Activated naive CD4-positive, alpha-beta T cell treated with anti-CD3 and anti-CD28 coated beads for 36 hours (primary cell): ENCODE measurements at regions of chr16 and their contacts with region 1.

Region 1: DNA sequence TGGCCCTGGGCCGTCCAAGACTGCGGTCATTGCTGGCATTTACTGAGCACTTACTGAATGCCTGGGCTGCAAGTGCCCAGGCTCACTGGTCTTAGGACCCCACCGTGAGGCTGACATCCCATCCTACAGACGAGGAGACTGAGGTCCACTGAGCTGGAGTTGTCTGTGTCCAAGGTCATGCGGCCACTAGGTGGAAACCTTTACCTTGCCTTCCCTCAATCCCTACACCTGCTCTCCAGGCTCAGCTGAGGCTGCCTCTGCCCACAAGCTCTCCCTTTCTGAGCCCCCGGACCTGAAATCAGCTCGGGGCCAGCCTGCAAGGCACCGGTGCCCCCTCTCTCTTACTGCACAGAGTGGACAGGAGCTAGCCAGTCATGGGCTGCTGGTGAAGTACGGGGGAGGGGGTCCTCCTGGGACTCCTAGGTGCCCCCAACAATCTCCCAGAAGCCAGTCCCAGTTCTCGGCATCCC is 1.5 kb downstream of the CASKIN1 start:
- DNase-seq: peak; percentile 71
- H3K4me3 Mint-ChIP-seq: no peak overlapping the region
- H3K27ac Mint-ChIP-seq: no peak overlapping the region
- H3K4me1 Mint-ChIP-seq: peaks cover 4% of the 10 kb centered on the region
- H3K27me3 Mint-ChIP-seq: peaks cover 26% of the 10 kb centered on the region

Region 2: DNA sequence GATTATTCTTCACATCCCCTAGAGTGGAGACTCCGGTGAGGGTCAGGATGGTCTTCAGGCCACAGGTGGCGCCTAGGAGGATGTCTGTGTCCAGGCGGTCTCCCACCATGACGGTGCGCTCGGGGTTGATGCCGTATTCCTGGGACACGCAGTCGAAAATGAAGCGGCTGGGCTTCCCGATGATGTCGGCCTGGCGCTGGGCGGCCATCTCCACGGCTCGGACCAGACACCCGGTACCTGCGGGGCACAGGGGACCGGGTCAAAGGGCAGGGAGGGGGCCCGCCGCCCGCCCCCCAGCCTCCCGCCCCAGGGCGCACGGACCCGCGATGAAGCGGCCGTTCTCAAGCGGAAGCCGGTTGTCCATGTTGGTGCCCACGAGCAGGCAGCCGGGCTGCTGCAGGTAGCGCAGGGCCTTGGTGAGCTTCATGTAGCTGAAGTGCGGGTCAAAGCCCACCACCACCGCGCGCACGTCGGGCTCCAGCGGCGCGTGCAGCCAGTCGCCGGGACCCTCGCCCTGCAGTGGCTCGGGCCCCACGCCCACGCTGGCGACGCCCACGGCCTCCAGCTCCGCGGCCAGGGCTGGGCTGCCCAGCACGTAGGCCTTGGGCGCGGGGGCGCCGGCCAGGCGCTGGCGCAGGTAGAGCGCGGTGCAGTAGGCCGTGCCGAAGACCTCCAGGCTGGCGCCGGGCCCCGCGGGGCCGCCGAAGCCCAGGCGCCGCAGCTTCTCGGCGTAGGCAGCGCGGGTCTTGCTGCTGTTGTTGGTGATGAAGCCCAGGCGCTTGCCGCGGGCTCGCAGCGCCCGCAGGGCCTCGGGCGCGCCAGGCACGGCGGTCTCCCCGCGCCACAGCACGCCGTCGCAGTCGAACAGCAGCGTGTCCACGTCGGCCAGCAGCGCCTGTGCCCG is 19.2 kb after region 1 on chr16:
- CTCF ChIA-PET with region 1: interaction called, 10 read pairs
- intact Hi-C with region 1: no loop called
- DNase-seq: no peak
- H3K4me3 Mint-ChIP-seq: peak overlapping the region; percentile 73
- H3K27ac Mint-ChIP-seq: no peak overlapping the region
- H3K4me1 Mint-ChIP-seq: peaks cover 22% of the 10 kb centered on the region
- H3K27me3 Mint-ChIP-seq: no peaks in the 10 kb centered on the region

Region 3: DNA sequence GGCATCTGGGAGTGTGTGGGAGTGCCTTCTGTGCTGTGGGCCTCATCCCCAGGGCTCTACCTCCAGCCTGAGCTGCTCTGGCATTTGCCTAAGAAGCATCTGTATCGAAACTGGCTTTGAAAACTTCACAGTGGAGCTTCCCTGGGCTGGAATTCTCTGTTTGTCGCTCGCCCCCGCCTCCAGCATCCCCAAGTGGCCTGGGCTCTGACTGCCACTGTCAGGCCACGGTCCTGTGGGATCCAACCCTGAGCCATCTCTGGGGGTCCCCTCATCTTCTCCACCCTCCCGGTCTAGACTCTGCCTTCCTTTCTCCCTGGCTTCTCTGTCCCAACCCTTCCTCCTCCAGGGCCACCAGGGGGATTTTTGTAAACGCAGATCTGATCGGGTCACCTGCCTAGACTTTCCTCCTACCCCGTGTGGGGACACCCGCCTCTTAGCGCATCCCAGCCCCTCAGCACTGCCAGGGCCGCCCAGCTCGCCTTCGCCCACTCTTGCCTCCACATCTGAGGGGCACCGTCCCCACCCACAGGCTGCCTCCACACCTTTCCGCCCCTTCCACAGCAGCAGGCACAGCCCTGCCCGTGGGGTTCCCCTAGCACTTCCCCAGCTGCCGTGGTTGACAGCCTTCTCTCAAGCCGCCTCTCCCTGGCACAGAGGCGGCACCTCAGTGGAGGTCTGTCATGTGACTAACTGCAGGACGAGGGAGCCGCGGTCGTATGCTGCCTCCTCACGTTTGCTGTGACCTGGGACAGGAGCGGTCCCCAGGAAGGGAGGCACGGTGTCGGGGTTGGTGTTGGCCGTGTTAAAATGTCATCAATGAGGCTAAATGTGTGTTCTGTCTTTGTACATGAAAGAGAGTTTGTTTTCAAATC is 292.0 kb after region 1 on chr16:
- CTCF ChIA-PET with region 1: no interaction called
- intact Hi-C with region 1: loop called (anchors 2 kb)
- DNase-seq: peak; percentile 94
- H3K4me3 Mint-ChIP-seq: peak overlapping the region; percentile 10
- H3K27ac Mint-ChIP-seq: peak overlapping the region; percentile 69
- H3K4me1 Mint-ChIP-seq: peaks cover 16% of the 10 kb centered on the region
- H3K27me3 Mint-ChIP-seq: no peaks in the 10 kb centered on the region

Region 4: DNA sequence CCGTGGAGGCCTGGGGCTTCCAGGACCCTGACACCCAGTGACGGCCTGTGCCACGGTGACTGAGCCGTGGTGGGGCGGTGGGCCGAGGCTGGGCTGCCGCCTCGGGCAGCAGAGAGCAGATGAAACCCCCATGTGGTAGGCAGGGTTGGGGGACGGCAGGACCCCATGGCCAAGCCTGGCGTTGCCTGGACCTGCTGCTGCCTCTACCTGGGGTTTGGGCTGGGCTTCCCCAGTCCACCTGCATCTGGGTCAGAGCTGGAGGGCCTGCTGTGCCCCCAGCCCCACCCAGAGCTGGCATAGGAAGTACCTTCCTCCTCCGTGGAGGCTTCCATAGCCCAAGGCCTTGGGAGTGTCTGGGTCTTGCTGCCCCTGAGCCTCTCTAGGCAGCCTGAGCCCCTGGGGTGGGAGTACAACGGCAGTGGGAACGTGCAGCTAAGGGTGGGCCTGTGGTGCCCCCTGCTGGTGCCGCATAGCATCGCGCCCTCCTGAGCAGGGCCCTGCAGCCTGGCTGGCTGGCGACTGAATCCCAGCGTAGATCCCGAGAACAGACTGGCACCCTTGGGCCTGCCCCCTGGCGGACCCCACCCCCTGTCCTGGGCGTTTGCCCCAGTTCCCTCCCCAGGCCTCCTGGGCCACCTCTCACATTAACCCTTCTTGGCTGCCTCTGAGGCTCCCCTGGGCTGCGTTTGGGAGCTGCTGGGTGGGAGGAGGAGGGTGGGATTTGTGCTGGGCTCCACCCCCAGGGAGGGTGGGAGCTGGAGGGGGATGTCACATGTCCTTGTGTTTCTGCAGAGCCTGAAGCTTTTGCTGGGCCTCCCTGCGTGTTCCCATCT is 306.2 kb after region 1 on chr16:
- CTCF ChIA-PET with region 1: interaction called, 4 read pairs
- intact Hi-C with region 1: loop called (anchors 1 kb)
- DNase-seq: peak; percentile 84
- H3K4me3 Mint-ChIP-seq: no peak overlapping the region
- H3K27ac Mint-ChIP-seq: no peak overlapping the region
- H3K4me1 Mint-ChIP-seq: peaks cover 2% of the 10 kb centered on the region
- H3K27me3 Mint-ChIP-seq: no peaks in the 10 kb centered on the region